Left ventricle myocardium superior (tissue), 1 donor: ENCODE measurements at regions of chr7 and their contacts with region 1.

Region 1: GRCh38 chr7:124784879-124785818 is 19.6 kb upstream of the GPR37 start:
- DNase-seq: no peak
- ATAC-seq: peak; percentile 67

Region 2: DNA sequence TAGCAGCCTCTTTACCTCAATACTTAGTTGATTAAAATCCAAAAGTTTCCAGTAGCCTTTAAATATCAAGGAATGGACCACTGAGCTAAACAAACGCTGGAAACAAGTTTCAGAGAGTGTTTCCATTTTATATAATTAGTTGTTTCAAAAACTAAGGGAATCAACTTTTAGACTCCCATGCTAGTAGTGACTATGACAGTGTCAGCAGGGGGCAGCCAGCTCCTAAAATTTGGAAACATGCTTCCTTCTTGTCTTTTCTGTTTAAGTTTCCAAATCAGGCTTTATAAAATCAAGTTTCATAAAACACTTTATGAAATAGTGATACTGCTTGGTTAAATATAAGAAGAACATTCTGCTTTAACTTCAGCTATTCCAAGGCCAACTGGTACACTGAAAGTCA is 614.1 kb before region 1 on chr7:
- intact Hi-C with region 1: loop called (anchors 5 kb)
- DNase-seq: peak; percentile 33
- ATAC-seq: no peak

Region 3: GRCh38 chr7:125147047-125147446 is 361.9 kb after region 1 on chr7:
- intact Hi-C with region 1: no loop called
- DNase-seq: no peak
- ATAC-seq: no peak

Region 4: GRCh38 chr7:125246706-125247105 is 461.6 kb after region 1 on chr7:
- intact Hi-C with region 1: no loop called
- DNase-seq: no peak
- ATAC-seq: no peak